ENCODE measurements at regions of chr10 and their contacts with region 1.

Region 1: GRCh38 chr10:6202684-6203330 is at the start of gene PFKFB3:
- DNase-seq: peak; percentile 99
- total RNA-seq, gene PFKFB3: 13.8 TPM

Region 2: GRCh38 chr10:6088721-6089390 is 114.0 kb before region 1 on chr10 and contains the start of gene RBM17:
- intact Hi-C with region 1: loop called (anchors 5 kb)
- DNase-seq: peak; percentile 98
- total RNA-seq, gene RBM17: 70.1 TPM

Region 3: DNA sequence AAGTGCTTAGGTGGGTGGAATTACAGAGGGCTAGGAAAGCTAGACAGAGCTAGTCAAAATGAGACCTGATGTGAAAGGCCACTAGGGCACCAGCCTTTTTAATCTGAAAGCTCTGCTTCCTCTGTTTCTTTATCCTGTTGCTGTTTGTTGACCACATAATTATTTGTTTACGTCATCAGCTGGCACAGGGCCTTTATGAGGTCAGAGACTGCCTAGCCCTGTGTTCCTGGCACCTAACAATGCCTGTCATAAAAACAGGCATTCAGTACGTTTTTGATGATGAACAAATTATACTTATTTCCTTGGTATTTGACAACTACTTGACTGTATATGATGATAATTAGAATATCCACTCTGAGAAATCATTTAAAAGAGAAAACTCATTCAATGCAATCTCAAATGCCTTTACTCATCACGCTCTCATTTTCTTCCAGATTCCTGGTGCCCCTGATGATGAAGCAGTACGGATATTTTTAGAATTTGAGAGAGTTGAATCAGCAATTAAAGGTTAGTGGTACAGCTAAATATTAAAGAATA is 87.9 kb before region 1 on chr10:
- intact Hi-C with region 1: loop called (anchors 5 kb)
- DNase-seq: no peak

Region 4: GRCh38 chr10:6163364-6164270 is 39.2 kb before region 1 on chr10:
- intact Hi-C with region 1: loop called (anchors 2 kb)
- DNase-seq: peak; percentile 95

Region 5: DNA sequence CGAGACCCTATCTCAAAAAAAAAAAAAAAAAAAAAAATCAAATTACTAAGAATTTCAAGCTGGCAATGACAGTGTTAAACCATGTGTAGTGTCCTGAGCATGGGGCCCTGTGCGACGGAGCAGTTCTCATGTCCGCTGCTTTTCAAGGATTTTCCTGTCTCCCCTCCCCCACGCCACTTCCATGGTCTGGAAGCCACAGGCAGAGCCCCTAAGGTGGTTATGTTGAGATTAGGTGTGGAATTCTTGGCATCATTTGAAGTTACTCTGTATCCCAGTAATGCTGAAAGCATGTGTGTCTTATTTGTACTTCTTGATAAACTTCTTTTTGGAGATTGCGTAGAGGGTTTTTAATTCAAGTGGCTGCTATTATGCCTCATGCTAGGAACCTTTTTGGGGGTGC is 65.1 kb after region 1 on chr10:
- intact Hi-C with region 1: no loop called
- DNase-seq: no peak

Region 6: GRCh38 chr10:6458814-6459213 is 256.0 kb after region 1 on chr10:
- intact Hi-C with region 1: no loop called
- DNase-seq: no peak

Region 7: GRCh38 chr10:6507311-6507710 is 304.5 kb after region 1 on chr10:
- intact Hi-C with region 1: no loop called
- DNase-seq: no peak

Measured in cardiac septum (tissue), 1 donor.